SK-N-SH (cell line): ENCODE measurements at regions of chr16 and their contacts with region 1.

Region 1: GRCh38 chr16:28823872-28824716 is 1.3 kb downstream of the ATXN2L start:
- DNase-seq: peak; percentile 96
- H3K4me3 ChIP-seq: peak overlapping the region; percentile 81 to 90
- H3K27ac ChIP-seq: peak overlapping the region; percentile 91 to 95
- H3K4me1 ChIP-seq: peaks cover 9 to 13% of the 10 kb centered on the region in 2 experiments; a peak in 3 of 4 replicates
- H3K27me3 ChIP-seq: no peaks in the 10 kb centered on the region
- CTCF ChIP-seq: peak; percentile 33; the same call in 1 of the 2 replicates
- EP300 ChIP-seq: no peak
- RAD21 ChIP-seq: no peak

Region 2: GRCh38 chr16:28863929-28864793 is 40.1 kb after region 1 on chr16:
- CTCF ChIA-PET with region 1: interaction called, 3 read pairs
- POLR2A ChIA-PET with region 1: interaction called, 16 read pairs
- DNase-seq: peak; percentile 60
- H3K4me3 ChIP-seq: peak overlapping the region; percentile 87 to 94
- H3K27ac ChIP-seq: peak overlapping the region; percentile 97 to 98
- H3K4me1 ChIP-seq: peaks cover 13 to 14% of the 10 kb centered on the region in 2 experiments; a peak in 3 of 4 replicates
- H3K27me3 ChIP-seq: no peaks in the 10 kb centered on the region
- CTCF ChIP-seq: no peak
- EP300 ChIP-seq: no peak
- RAD21 ChIP-seq: no peak

Region 3: GRCh38 chr16:28958836-28959235 is 134.7 kb after region 1 on chr16:
- CTCF ChIA-PET with region 1: no interaction called
- POLR2A ChIA-PET with region 1: no interaction called
- DNase-seq: no peak
- H3K4me3 ChIP-seq: no peak overlapping the region
- H3K27ac ChIP-seq: no peak overlapping the region
- H3K4me1 ChIP-seq: no peaks in the 10 kb centered on the region
- H3K27me3 ChIP-seq: no peaks in the 10 kb centered on the region
- CTCF ChIP-seq: no peak
- EP300 ChIP-seq: no peak
- RAD21 ChIP-seq: no peak

Region 4: GRCh38 chr16:29007730-29008593 is 183.9 kb after region 1 on chr16:
- CTCF ChIA-PET with region 1: no interaction called
- POLR2A ChIA-PET with region 1: no interaction called
- DNase-seq: no peak
- H3K4me3 ChIP-seq: no peak overlapping the region
- H3K27ac ChIP-seq: no peak overlapping the region
- H3K4me1 ChIP-seq: no peaks in the 10 kb centered on the region
- H3K27me3 ChIP-seq: no peaks in the 10 kb centered on the region
- CTCF ChIP-seq: no peak
- EP300 ChIP-seq: no peak
- RAD21 ChIP-seq: no peak